H1 (cell line): ENCODE measurements at regions of chr22 and their contacts with region 1.

Region 1: DNA sequence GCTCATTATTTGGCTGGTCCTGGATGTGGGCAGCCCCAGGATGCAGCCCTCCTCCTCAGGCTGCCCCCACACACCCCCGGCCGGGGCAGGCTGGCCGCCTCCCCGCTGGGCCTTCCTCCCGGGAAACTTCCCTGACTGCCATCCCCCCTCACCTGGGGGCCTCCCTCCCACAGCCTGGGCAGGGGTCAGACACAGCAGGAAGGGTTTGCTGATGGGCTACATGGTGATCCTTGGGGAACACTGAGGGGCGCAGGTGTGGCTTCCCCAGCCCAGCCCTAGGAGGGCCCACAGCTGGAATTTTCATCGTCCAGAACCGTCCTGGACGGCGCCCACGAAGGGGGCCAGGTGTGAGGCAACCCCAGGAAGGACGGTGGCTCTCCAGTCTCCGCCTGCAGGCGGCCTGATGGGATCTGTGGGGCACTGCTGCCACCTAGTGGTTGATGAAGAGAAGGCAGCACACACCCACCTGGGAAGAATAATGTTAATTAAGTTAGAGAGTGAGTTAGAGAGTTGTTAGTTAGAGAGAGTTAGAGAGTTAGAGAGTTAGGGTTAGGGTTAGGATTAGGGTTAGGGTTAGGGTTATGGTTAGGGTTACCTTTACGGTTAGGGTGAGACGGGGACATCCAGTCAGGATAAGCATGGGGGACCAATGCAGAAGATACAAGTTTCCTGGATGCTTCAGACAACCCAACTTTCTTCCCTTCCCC is 75.9 kb upstream of the PRR5 start:
- DNase-seq: peak; percentile 31 to 93
- H3K4me3 ChIP-seq: no peak overlapping the region
- H3K27ac ChIP-seq: no peak overlapping the region
- H3K4me1 ChIP-seq: peaks cover 0 to 6% (median 0%) of the 10 kb centered on the region in 4 experiments; a peak in 1 of 7 replicates
- H3K27me3 ChIP-seq: peaks cover 19 to 54% (median 52%) of the 10 kb centered on the region in 4 experiments
- CTCF ChIP-seq: peak; percentile 85 to 99 (median 90)
- EP300 ChIP-seq: no peak
- POLR2A ChIP-seq: no peak
- RAD21 ChIP-seq: peak; percentile 99 to 100

Region 2: GRCh38 chr22:44600207-44600785 is 25.8 kb before region 1 on chr22:
- CTCF ChIA-PET with region 1: interaction called, 11 read pairs
- POLR2A ChIA-PET with region 1: no interaction called
- DNase-seq: no peak
- H3K4me3 ChIP-seq: no peak overlapping the region
- H3K27ac ChIP-seq: no peak overlapping the region
- H3K4me1 ChIP-seq: peaks cover 0 to 9% (median 2%) of the 10 kb centered on the region in 4 experiments; a peak in 3 of 7 replicates
- H3K27me3 ChIP-seq: no peaks in the 10 kb centered on the region
- CTCF ChIP-seq: no peak
- EP300 ChIP-seq: no peak
- POLR2A ChIP-seq: no peak
- RAD21 ChIP-seq: no peak

Region 3: GRCh38 chr22:44611880-44612496 is 14.1 kb before region 1 on chr22:
- CTCF ChIA-PET with region 1: interaction called, 12 read pairs
- POLR2A ChIA-PET with region 1: interaction called, 3 read pairs
- DNase-seq: no peak
- H3K4me3 ChIP-seq: no peak overlapping the region
- H3K27ac ChIP-seq: no peak overlapping the region
- H3K4me1 ChIP-seq: peaks cover 0 to 9% (median 6%) of the 10 kb centered on the region in 4 experiments; a peak in 3 of 7 replicates
- H3K27me3 ChIP-seq: no peaks in the 10 kb centered on the region
- CTCF ChIP-seq: no peak
- EP300 ChIP-seq: no peak
- POLR2A ChIP-seq: no peak
- RAD21 ChIP-seq: no peak